ENCODE measurements at regions of chr17 and their contacts with region 1.

Region 1: GRCh38 chr17:6137716-6138502 is 67.7 kb downstream of the WSCD1 start:
- DNase-seq: no peak
- H3K4me3 ChIP-seq: no peak overlapping the region
- H3K27ac ChIP-seq: no peak overlapping the region
- H3K4me1 ChIP-seq: no peaks in the 10 kb centered on the region
- H3K27me3 ChIP-seq: peaks cover 7% of the 10 kb centered on the region
- CTCF ChIP-seq: no peak
- EP300 ChIP-seq: no peak
- POLR2A ChIP-seq: no peak

Region 2: GRCh38 chr17:5097101-5097834 is 1040.6 kb before region 1 on chr17:
- in situ Hi-C with region 1: no loop called
- intact Hi-C with region 1: no loop called
- DNase-seq: peak; percentile 50
- H3K4me3 ChIP-seq: peak overlapping the region in 3 of 4 donors; percentile 23 to 55 (median 26)
- H3K27ac ChIP-seq: peak overlapping the region; percentile 7 to 64 (median 48)
- H3K4me1 ChIP-seq: peaks cover 0 to 6% (median 0%) of the 10 kb centered on the region in 4 donors
- H3K27me3 ChIP-seq: peaks cover 4% of the 10 kb centered on the region
- CTCF ChIP-seq: no peak
- EP300 ChIP-seq: no peak
- POLR2A ChIP-seq: no peak

Region 3: DNA sequence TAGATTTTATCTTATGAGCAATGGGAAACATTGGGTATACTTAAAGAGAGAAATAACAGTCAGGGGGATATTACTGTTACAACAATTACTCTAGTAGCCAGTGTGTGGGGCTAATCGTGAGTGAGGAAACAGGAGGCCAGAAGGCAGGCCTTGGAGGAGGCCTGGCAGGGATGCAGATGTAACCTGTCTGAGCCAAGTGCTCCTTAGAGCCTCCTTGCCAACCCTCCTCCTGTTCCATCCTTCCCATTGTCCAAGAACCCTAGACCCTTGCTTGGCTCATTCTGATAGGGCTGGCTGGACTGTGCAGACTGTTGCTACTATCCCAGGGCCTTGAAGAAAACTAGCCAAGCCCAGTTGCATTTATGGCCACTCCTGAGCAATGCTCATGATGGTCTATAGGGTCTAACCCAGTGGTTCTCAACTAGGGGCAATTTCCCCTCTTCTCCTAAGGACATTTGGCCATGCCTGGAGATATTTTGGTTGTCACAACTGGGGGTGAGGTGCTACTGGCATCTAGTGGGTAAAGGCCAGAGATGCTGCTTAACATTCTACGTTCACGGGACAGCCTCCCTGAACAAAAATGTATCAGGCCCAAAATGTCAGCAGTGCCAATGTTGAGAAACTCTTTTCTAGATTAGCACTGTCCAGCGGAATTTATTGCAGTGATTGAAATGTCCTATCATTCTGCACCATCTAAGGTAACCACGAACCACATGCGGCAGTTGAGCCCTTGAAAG is 92.1 kb before region 1 on chr17:
- in situ Hi-C with region 1: loop called in 1 of 4 experiments (anchors 25 kb)
- intact Hi-C with region 1: no loop called
- DNase-seq: no peak
- H3K4me3 ChIP-seq: no peak overlapping the region
- H3K27ac ChIP-seq: no peak overlapping the region
- H3K4me1 ChIP-seq: no peaks in the 10 kb centered on the region
- H3K27me3 ChIP-seq: no peaks in the 10 kb centered on the region
- CTCF ChIP-seq: no peak
- EP300 ChIP-seq: no peak
- POLR2A ChIP-seq: no peak

Region 4: GRCh38 chr17:6231886-6232731 is 94.2 kb after region 1 on chr17:
- in situ Hi-C with region 1: no loop called
- intact Hi-C with region 1: no loop called
- DNase-seq: no peak
- H3K4me3 ChIP-seq: no peak overlapping the region
- H3K27ac ChIP-seq: no peak overlapping the region
- H3K4me1 ChIP-seq: no peaks in the 10 kb centered on the region
- H3K27me3 ChIP-seq: peaks cover 3% of the 10 kb centered on the region
- CTCF ChIP-seq: no peak
- EP300 ChIP-seq: no peak
- POLR2A ChIP-seq: no peak